K562 (cell line): ENCODE measurements at regions of chr5 and their contacts with region 1.

Region 1: GRCh38 chr5:115544436-115545350 is at the start of gene FEM1C:
- DNase-seq: peak; percentile 95 to 96 (median 96)
- ATAC-seq: peak; percentile 97
- H3K4me3 ChIP-seq: peak within 1 kb of the TSS; percentile 84
- H3K27ac ChIP-seq: peak within 1 kb of the TSS; percentile 89
- H3K4me1 ChIP-seq: peaks cover 3 to 7% of the 10 kb centered on the region in 2 experiments; a peak in 2 of 5 replicates
- H3K27me3 ChIP-seq: no peaks in the 10 kb centered on the region
- CTCF ChIP-seq: no peak
- EP300 ChIP-seq: peak; percentile 32; the same call in 1 of the 2 replicates
- POLR2A ChIP-seq: peak; percentile 92
- RAD21 ChIP-seq: no peak
- polyA plus RNA-seq, gene FEM1C: 1.4 to 3.9 TPM

Region 2: DNA sequence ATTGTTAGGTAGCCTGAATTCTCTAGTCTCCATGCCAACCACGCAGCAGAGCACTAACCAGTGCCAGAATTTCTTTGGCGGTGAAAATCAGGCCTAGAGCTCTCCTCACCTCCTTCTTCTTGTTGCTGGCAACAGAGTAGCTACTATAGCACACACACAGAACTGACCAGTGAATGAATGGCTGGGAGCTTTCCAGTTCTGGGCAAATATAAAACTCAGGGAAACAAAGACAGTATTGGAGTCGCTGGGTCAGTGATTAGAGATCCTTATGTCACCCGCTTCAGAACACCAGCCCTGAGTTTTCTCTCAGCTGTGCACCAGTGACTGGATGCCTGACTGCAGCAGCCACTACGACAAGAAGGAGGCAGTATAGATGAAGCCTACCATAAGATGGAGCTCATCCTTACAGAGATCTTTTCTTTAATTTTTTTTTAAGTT is 26.8 kb after region 1 on chr5:
- CTCF ChIA-PET with region 1: no interaction called
- POLR2A ChIA-PET with region 1: interaction called, 3 read pairs
- in situ Hi-C with region 1: no loop called
- intact Hi-C with region 1: loop called (anchors 1 kb)
- DNase-seq: no peak
- ATAC-seq: peak; percentile 65; the same call in 2 of the 3 replicates
- H3K4me3 ChIP-seq: no peak overlapping the region
- H3K27ac ChIP-seq: no peak overlapping the region
- H3K4me1 ChIP-seq: no peaks in the 10 kb centered on the region
- H3K27me3 ChIP-seq: peaks cover 0 to 2% of the 10 kb centered on the region in 2 experiments; a peak in 2 of 5 replicates
- CTCF ChIP-seq: peak in 2 of 3 experiments; percentile 2 to 10; a peak in 1 of 6 replicates
- EP300 ChIP-seq: no peak
- POLR2A ChIP-seq: no peak
- RAD21 ChIP-seq: no peak

Region 3: GRCh38 chr5:115586601-115587048 is 41.9 kb after region 1 on chr5:
- CTCF ChIA-PET with region 1: no interaction called
- POLR2A ChIA-PET with region 1: no interaction called
- in situ Hi-C with region 1: no loop called
- intact Hi-C with region 1: loop called (anchors 5 kb)
- DNase-seq: peak; percentile 14 to 25 (median 16)
- ATAC-seq: peak; percentile 53; the same call in 1 of the 3 replicates
- H3K4me3 ChIP-seq: no peak overlapping the region
- H3K27ac ChIP-seq: no peak overlapping the region
- H3K4me1 ChIP-seq: no peaks in the 10 kb centered on the region
- H3K27me3 ChIP-seq: no peaks in the 10 kb centered on the region
- CTCF ChIP-seq: peak in 2 of 3 experiments; percentile 43 to 60; a peak in 4 of 6 replicates
- EP300 ChIP-seq: no peak
- POLR2A ChIP-seq: no peak
- RAD21 ChIP-seq: peak; percentile 70 to 72

Region 4: GRCh38 chr5:115625579-115626444 is 81.1 kb after region 1 on chr5 and contains the start of gene TMED7:
- CTCF ChIA-PET with region 1: no interaction called
- POLR2A ChIA-PET with region 1: no interaction called
- in situ Hi-C with region 1: no loop called
- intact Hi-C with region 1: loop called (anchors 5 kb)
- DNase-seq: peak; percentile 93 to 99 (median 93)
- ATAC-seq: peak; percentile 94
- H3K4me3 ChIP-seq: peak within 1 kb of the TSS; percentile 95
- H3K27ac ChIP-seq: peak within 1 kb of the TSS; percentile 96
- H3K4me1 ChIP-seq: peaks cover 9 to 19% of the 10 kb centered on the region in 2 experiments; a peak in 4 of 5 replicates
- H3K27me3 ChIP-seq: no peaks in the 10 kb centered on the region
- CTCF ChIP-seq: no peak
- EP300 ChIP-seq: peak; percentile 31; the same call in 1 of the 2 replicates
- POLR2A ChIP-seq: peak; percentile 93
- RAD21 ChIP-seq: no peak
- polyA plus RNA-seq, gene TMED7: 15.9 to 16.5 TPM

Region 5: DNA sequence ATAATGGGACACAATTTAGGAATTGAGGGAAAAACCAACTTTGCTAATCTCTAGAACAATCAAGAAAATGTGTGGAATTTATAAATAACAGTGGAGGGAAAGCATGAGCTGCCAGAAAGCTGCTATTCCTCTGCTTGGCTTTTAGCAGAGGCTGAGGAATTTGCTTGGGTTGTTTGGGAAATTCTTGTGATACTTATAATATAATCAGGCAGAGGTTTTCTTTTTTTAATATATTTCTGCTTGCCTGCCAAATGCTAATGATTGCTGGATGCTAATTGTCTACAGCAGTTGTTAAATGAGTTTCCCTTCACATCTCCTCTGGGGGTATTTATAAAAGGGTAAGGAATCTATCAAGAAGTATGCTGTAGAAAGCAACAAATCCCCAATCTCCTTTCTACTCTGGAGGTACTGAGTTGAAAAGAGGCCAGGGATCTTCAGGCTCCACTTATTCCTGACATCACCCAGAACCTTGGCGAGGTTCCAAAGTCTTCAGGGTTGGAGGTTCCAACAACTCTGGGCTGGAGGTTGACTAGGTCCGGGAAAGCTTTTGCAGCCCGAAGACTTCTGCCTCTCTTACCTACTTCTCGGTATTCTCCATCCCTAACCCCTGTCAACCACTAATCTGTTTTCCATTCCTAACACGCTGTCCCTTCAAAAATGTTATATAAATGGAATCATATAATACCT is 141.5 kb after region 1 on chr5:
- CTCF ChIA-PET with region 1: no interaction called
- POLR2A ChIA-PET with region 1: no interaction called
- in situ Hi-C with region 1: no loop called
- intact Hi-C with region 1: no loop called
- DNase-seq: peak in 1 of 4 experiments; percentile 5
- ATAC-seq: no peak
- H3K4me3 ChIP-seq: no peak overlapping the region
- H3K27ac ChIP-seq: no peak overlapping the region
- H3K4me1 ChIP-seq: no peaks in the 10 kb centered on the region
- H3K27me3 ChIP-seq: peaks cover 0 to 4% of the 10 kb centered on the region in 2 experiments; a peak in 1 of 5 replicates
- CTCF ChIP-seq: no peak
- EP300 ChIP-seq: no peak
- POLR2A ChIP-seq: no peak
- RAD21 ChIP-seq: no peak